Heart left ventricle (tissue), 16 donors: ENCODE measurements at regions of chr9 and their contacts with region 1.

Region 1: DNA sequence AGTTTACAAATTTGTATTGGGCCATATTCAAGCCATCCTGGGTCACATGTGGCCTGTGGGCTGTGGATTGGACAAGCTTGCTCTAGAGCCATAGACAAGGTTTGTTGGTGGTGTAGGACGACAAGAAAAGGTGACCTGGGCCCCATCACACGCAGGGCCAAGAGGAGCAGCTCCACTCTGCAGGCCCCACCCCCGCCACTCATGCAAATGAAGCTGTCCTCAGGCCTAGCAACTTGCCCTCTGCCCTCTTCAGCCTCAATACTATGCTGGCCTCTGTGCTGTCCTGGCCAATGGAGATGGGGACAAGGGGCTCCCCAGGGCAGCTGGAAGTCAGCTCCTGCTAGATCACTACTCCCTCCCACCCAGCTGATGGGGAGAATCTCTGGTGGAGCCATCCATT is 55.2 kb upstream of the TMEM252 start:
- DNase-seq: no peak
- ATAC-seq: no peak
- H3K4me3 ChIP-seq: no peak overlapping the region
- H3K27ac ChIP-seq: no peak overlapping the region
- H3K4me1 ChIP-seq: no peaks in the 10 kb centered on the region
- H3K27me3 ChIP-seq: no peaks in the 10 kb centered on the region
- CTCF ChIP-seq: no peak
- POLR2A ChIP-seq: no peak

Region 2: GRCh38 chr9:68416936-68417564 is 178.8 kb before region 1 on chr9:
- intact Hi-C with region 1: no loop called
- DNase-seq: no peak
- ATAC-seq: no peak
- H3K4me3 ChIP-seq: no peak overlapping the region
- H3K27ac ChIP-seq: peak overlapping the region; percentile 34 to 93 (median 86)
- H3K4me1 ChIP-seq: peaks cover 0 to 52% (median 17%) of the 10 kb centered on the region in 12 donors
- H3K27me3 ChIP-seq: no peaks in the 10 kb centered on the region
- CTCF ChIP-seq: peak in 7 of 12 donors; percentile 10 to 30 (median 23)
- POLR2A ChIP-seq: no peak

Region 3: GRCh38 chr9:68637020-68637419 is 41.2 kb after region 1 on chr9:
- intact Hi-C with region 1: loop called in 1 of 10 experiments (anchors 5 kb)
- DNase-seq: no peak
- ATAC-seq: no peak
- H3K4me3 ChIP-seq: no peak overlapping the region
- H3K27ac ChIP-seq: no peak overlapping the region
- H3K4me1 ChIP-seq: peaks cover 0 to 2% (median 0%) of the 10 kb centered on the region in 12 donors
- H3K27me3 ChIP-seq: no peaks in the 10 kb centered on the region
- CTCF ChIP-seq: no peak
- POLR2A ChIP-seq: no peak

Region 4: GRCh38 chr9:68685770-68686169 is 89.9 kb after region 1 on chr9:
- intact Hi-C with region 1: loop called in 2 of 10 experiments (anchors 5 kb)
- DNase-seq: no peak
- ATAC-seq: no peak
- H3K4me3 ChIP-seq: no peak overlapping the region
- H3K27ac ChIP-seq: no peak overlapping the region
- H3K4me1 ChIP-seq: peaks cover 0 to 18% (median 4%) of the 10 kb centered on the region in 12 donors
- H3K27me3 ChIP-seq: peaks cover 0 to 5% (median 0%) of the 10 kb centered on the region in 9 donors
- CTCF ChIP-seq: peak in 7 of 12 donors; percentile 9 to 31 (median 20)
- POLR2A ChIP-seq: no peak

Region 5: DNA sequence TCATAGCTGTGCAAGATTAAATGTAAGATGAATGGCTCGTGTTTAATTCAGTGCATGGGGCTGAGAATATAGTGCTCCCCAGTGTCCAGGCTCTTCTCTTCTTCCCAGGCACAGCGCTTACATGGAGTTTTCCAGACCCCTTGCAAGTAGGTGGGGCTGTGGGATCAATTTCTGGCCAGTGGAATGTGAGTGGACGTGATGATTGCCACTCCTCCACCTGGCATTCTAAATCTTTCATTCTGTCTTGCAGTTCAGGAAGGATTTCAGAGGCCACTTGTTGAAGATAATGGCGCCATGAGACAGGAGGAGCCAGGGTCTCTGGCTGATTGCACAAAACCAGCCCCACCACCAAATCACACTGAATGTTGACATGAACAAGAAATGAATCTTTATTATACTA is 102.0 kb after region 1 on chr9:
- intact Hi-C with region 1: loop called in 3 of 10 experiments (anchors 5 kb)
- DNase-seq: no peak
- ATAC-seq: no peak
- H3K4me3 ChIP-seq: no peak overlapping the region
- H3K27ac ChIP-seq: no peak overlapping the region
- H3K4me1 ChIP-seq: peaks cover 0 to 7% (median 0%) of the 10 kb centered on the region in 12 donors
- H3K27me3 ChIP-seq: no peaks in the 10 kb centered on the region
- CTCF ChIP-seq: no peak
- POLR2A ChIP-seq: no peak

Region 6: GRCh38 chr9:68851657-68852056 is 255.8 kb after region 1 on chr9:
- intact Hi-C with region 1: loop called in 1 of 10 experiments (anchors 5 kb)
- DNase-seq: no peak
- ATAC-seq: peak in 3 of 4 donors; percentile 44 to 68 (median 65)
- H3K4me3 ChIP-seq: no peak overlapping the region
- H3K27ac ChIP-seq: no peak overlapping the region
- H3K4me1 ChIP-seq: peaks cover 0 to 15% (median 0%) of the 10 kb centered on the region in 12 donors
- H3K27me3 ChIP-seq: no peaks in the 10 kb centered on the region
- CTCF ChIP-seq: no peak
- POLR2A ChIP-seq: no peak

Region 7: DNA sequence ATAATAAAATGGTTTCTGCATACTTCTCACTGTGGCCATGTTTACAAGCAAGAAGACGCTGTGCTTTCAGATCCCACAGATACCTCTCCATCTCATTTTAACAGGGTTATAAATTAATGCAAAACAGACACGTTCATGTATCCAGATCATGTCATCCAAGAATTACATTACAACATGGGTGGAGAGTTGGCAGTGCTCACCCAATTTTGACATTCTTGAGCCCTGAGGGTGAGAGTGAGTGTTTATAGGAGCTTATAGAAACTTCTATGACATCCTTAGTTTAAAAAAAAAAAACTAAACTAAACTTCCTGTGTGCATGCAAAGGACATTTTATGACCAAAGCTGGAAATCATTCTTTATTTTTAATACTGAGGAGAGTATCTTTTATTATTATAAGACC is 409.0 kb after region 1 on chr9:
- intact Hi-C with region 1: loop called in 2 of 10 experiments (anchors 5 kb)
- DNase-seq: no peak
- ATAC-seq: no peak
- H3K4me3 ChIP-seq: no peak overlapping the region
- H3K27ac ChIP-seq: no peak overlapping the region
- H3K4me1 ChIP-seq: peaks cover 0 to 2% (median 0%) of the 10 kb centered on the region in 12 donors
- H3K27me3 ChIP-seq: no peaks in the 10 kb centered on the region
- CTCF ChIP-seq: no peak
- POLR2A ChIP-seq: no peak

Region 8: DNA sequence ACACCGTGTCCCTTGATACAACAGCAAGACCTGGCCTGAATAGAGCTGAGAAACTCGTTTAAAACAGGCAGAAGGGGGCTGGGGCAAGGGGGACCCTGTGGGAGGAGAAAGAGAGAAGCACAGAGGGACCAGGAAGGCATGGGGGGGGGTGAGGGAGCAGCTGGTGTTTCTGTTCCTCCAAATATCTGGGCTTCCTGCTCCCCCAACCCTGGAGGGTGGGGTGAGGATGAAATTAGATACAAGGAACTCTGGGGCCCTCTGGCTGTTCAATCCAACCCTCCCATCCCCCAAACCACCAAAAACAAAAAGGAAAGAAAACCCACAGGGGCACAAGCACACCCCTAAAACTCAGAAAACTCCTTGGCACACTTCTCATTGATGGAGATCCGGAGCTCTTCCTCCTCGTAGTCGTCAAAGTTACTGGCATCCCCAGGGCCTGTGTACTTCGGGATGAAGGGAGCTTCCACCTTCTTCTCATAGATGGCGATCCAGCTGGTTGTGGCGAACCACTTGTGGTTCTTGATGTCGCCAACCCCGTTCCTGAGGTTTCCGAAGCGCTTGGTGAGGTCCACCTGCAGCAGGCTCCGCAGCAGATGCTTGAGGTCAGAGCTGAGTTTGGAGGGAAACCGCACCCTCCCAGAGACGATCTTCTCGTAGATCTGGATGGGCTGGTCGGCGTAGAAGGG is 417.0 kb after region 1 on chr9:
- intact Hi-C with region 1: loop called in 2 of 10 experiments (anchors 5 kb)
- DNase-seq: no peak
- ATAC-seq: no peak
- H3K4me3 ChIP-seq: no peak overlapping the region
- H3K27ac ChIP-seq: no peak overlapping the region
- H3K4me1 ChIP-seq: peaks cover 0 to 7% (median 0%) of the 10 kb centered on the region in 12 donors
- H3K27me3 ChIP-seq: no peaks in the 10 kb centered on the region
- CTCF ChIP-seq: no peak
- POLR2A ChIP-seq: no peak